Endothelial cell of umbilical vein (primary cell): ENCODE measurements at regions of chr22 and their contacts with region 1.

Region 1: GRCh38 chr22:22463855-22464540 is 44.5 kb downstream of the ZNF280B start:
- DNase-seq: peak; percentile 54
- H3K4me3 ChIP-seq: no peak overlapping the region
- H3K27ac ChIP-seq: no peak overlapping the region
- H3K4me1 ChIP-seq: no peaks in the 10 kb centered on the region
- H3K27me3 ChIP-seq: peaks cover 0 to 4% of the 10 kb centered on the region in 2 experiments
- CTCF ChIP-seq: peak; percentile 48 to 51
- POLR2A ChIP-seq: no peak

Region 2: DNA sequence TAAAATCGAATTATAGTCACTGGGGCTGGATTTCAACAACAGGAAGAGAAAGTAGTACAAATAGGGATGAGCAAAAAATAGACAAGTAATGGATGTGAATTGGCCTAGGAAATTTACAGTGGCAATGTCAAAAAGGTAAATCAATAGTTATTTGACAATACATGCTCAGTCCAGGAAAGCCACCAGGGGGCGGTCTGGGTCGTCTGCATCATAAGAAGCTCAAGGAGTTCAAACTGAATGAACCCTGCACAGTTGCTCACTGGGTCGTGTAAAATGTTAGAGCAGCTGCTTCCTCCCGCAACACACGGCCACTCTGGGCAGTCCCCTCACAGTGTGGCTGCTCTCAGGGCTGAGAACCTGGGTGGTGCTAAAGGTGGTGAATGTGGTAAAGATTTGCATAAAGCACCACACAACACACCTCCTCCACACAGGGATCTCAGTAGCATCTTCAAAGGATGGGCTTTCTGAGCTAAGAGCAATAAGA is 41.3 kb before region 1 on chr22:
- CTCF ChIA-PET with region 1: interaction called, 12 read pairs
- POLR2A ChIA-PET with region 1: no interaction called
- dilution Hi-C with region 1: no loop called
- intact Hi-C with region 1: no loop called
- DNase-seq: peak; percentile 58
- H3K4me3 ChIP-seq: no peak overlapping the region
- H3K27ac ChIP-seq: no peak overlapping the region
- H3K4me1 ChIP-seq: no peaks in the 10 kb centered on the region
- H3K27me3 ChIP-seq: peaks cover 8 to 15% of the 10 kb centered on the region in 2 experiments
- CTCF ChIP-seq: peak; percentile 82
- POLR2A ChIP-seq: no peak

Region 3: GRCh38 chr22:22474733-22475132 is 10.7 kb after region 1 on chr22:
- CTCF ChIA-PET with region 1: interaction called, 13 read pairs
- POLR2A ChIA-PET with region 1: no interaction called
- dilution Hi-C with region 1: no loop called
- intact Hi-C with region 1: no loop called
- DNase-seq: no peak
- H3K4me3 ChIP-seq: no peak overlapping the region
- H3K27ac ChIP-seq: no peak overlapping the region
- H3K4me1 ChIP-seq: no peaks in the 10 kb centered on the region
- H3K27me3 ChIP-seq: no peaks in the 10 kb centered on the region
- CTCF ChIP-seq: no peak
- POLR2A ChIP-seq: no peak

Region 4: DNA sequence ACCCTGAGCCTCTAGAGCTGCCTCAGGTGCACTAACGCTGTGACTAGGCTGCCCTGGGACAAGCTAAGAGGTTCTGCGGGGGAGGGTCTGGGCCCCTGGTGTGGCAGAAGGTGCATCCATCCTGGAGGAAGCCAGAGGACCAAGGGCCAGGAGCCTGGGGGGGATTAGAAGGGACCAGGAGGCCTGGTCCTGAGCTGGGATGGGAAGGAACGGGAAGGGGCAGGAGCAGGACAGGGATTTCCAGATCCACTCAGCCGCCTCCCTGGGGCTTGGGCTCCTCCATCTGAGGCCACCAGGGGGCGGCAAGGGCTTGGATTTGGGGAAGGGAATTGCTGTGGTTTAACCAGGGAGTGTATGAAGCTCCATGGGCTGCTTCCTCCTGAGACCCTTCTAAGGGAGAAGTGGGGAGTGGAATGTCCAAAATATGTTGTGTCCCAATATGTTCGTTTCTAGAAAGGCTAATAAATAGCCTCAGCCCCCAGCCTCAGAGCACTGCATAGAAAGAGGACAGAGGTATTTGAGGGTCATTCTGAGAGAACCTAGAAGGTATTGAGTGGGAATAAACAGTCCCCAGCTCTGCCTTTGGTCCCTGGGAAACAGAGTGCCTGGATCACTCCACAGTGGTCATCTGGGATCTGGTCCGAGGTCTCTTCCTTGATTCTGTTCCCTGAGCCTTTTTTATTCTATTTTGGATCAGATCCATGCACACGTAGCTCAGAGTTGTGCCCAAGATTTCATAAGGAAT is 112.4 kb after region 1 on chr22:
- CTCF ChIA-PET with region 1: interaction called, 30 read pairs
- POLR2A ChIA-PET with region 1: no interaction called
- dilution Hi-C with region 1: no loop called
- intact Hi-C with region 1: loop called (anchors 1 kb)
- DNase-seq: peak; percentile 31
- H3K4me3 ChIP-seq: no peak overlapping the region
- H3K27ac ChIP-seq: no peak overlapping the region
- H3K4me1 ChIP-seq: no peaks in the 10 kb centered on the region
- H3K27me3 ChIP-seq: peaks cover 10 to 12% of the 10 kb centered on the region in 2 experiments
- CTCF ChIP-seq: peak; percentile 82 to 94
- POLR2A ChIP-seq: no peak

Region 5: DNA sequence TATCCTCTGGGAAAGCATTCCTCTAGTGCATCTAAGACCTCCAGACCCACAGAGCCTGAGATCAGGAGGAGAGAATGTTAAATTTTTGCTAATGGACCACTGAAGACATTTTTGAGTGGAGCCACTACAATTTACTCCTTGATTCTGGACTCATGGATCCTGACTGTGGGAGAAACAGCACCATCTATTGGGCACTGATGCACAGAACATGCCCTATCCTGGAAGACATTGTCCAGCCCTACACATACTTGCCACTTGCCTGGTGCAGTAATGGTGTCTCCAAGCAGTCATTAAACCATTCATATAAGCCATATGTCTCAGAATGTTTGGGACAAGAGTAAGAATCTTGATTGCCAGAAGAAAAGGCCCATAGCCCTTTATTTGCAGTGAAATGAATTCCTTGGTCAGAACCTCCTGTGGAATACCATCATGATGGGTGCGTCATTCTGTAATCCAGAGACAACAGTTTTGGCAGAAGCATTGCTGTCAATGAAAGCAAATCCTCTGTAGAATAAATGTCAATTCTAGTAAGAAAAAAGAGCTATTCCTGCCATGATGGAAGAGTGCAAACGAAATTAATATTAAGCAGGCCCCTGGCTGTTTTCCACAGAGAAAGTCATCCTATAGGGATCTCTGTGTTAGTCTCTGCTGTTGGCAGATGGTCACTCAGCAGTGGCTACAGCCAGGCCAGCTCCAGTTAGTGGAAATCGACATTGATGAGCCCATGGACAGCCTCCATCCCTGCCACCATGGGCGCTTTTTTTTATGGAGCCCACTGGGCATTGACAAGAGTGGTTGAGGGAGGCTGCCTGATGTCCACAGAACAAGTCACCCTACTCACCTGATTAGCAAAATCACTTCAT is 223.9 kb after region 1 on chr22:
- CTCF ChIA-PET with region 1: interaction called, 3 read pairs
- POLR2A ChIA-PET with region 1: no interaction called
- dilution Hi-C with region 1: no loop called
- intact Hi-C with region 1: loop called (anchors 2 kb)
- DNase-seq: peak; percentile 67
- H3K4me3 ChIP-seq: no peak overlapping the region
- H3K27ac ChIP-seq: no peak overlapping the region
- H3K4me1 ChIP-seq: peaks cover 2% of the 10 kb centered on the region
- H3K27me3 ChIP-seq: peaks cover 2 to 10% of the 10 kb centered on the region in 2 experiments
- CTCF ChIP-seq: peak; percentile 70 to 73
- POLR2A ChIP-seq: no peak

Region 6: DNA sequence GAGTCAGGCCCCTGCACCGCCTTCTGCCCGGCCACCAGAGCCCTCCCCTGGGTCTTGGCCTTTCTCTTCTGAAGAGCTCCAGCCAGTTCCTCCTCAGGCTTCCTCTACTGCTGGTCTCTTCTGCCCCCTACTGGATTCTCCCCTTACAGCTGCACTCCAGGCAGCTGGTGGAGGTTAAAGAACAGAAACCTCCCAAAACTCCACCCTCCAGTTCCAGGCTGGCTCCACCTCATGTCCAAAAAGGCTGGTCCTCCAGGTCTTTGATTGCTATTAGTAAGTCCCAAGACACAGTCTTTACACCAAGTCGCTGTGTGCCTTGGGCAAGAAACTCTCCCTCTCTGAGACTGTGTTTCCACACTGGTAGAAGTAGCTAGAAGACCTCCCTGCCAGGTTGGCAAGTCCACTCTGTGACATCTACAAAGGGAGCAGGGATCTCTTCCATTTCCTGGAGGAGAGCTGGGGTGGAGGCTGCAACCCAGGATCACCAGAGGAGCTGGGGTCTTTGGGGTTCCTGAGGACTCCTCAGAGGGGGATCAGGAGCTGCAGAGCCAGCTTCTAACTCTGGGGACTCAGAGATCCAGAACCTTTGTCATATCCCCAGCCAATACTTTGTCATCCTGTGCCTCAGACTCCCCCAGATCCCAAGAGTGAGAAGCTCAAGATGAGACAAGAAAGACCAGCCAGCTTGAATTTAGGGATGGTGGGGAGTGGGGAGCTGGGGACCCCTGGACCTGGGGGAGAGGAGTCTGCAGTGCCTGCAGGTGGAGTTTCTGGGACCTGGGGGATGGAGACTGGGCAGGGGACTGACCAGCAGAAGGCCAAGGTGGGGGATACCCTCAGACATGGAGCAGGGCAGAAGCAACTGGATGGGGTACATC is 420.3 kb after region 1 on chr22:
- CTCF ChIA-PET with region 1: interaction called, 12 read pairs
- POLR2A ChIA-PET with region 1: no interaction called
- dilution Hi-C with region 1: no loop called
- intact Hi-C with region 1: no loop called
- DNase-seq: peak; percentile 52
- H3K4me3 ChIP-seq: no peak overlapping the region
- H3K27ac ChIP-seq: no peak overlapping the region
- H3K4me1 ChIP-seq: no peaks in the 10 kb centered on the region
- H3K27me3 ChIP-seq: no peaks in the 10 kb centered on the region
- CTCF ChIP-seq: peak; percentile 42 to 75
- POLR2A ChIP-seq: no peak

Region 7: GRCh38 chr22:22928666-22929380 is 464.8 kb after region 1 on chr22:
- CTCF ChIA-PET with region 1: no interaction called
- POLR2A ChIA-PET with region 1: no interaction called
- dilution Hi-C with region 1: no loop called
- intact Hi-C with region 1: no loop called
- DNase-seq: no peak
- H3K4me3 ChIP-seq: no peak overlapping the region
- H3K27ac ChIP-seq: no peak overlapping the region
- H3K4me1 ChIP-seq: no peaks in the 10 kb centered on the region
- H3K27me3 ChIP-seq: no peaks in the 10 kb centered on the region
- CTCF ChIP-seq: no peak
- POLR2A ChIP-seq: no peak

Region 8: GRCh38 chr22:23047265-23047664 is 583.3 kb after region 1 on chr22:
- CTCF ChIA-PET with region 1: no interaction called
- POLR2A ChIA-PET with region 1: no interaction called
- dilution Hi-C with region 1: no loop called
- intact Hi-C with region 1: no loop called
- DNase-seq: no peak
- H3K4me3 ChIP-seq: no peak overlapping the region
- H3K27ac ChIP-seq: no peak overlapping the region
- H3K4me1 ChIP-seq: no peaks in the 10 kb centered on the region
- H3K27me3 ChIP-seq: peaks cover 0 to 13% of the 10 kb centered on the region in 2 experiments
- CTCF ChIP-seq: no peak
- POLR2A ChIP-seq: no peak